ENCODE measurements at regions of chr17 and their contacts with region 1.

Region 1: GRCh38 chr17:69523244-69523861 is 108.9 kb downstream of the MAP2K6 start:
- DNase-seq: peak; percentile 33
- H3K4me3 Mint-ChIP-seq: no peak overlapping the region
- H3K27ac Mint-ChIP-seq: no peak overlapping the region
- H3K4me1 Mint-ChIP-seq: no peaks in the 10 kb centered on the region
- H3K27me3 Mint-ChIP-seq: no peaks in the 10 kb centered on the region

Region 2: GRCh38 chr17:69246726-69247375 is 276.5 kb before region 1 on chr17:
- CTCF ChIA-PET with region 1: no interaction called
- intact Hi-C with region 1: loop called (anchors 2 kb)
- DNase-seq: no peak
- H3K4me3 Mint-ChIP-seq: no peak overlapping the region
- H3K27ac Mint-ChIP-seq: no peak overlapping the region
- H3K4me1 Mint-ChIP-seq: no peaks in the 10 kb centered on the region
- H3K27me3 Mint-ChIP-seq: no peaks in the 10 kb centered on the region

Region 3: GRCh38 chr17:69358688-69359596 is 164.4 kb before region 1 on chr17:
- CTCF ChIA-PET with region 1: interaction called, 4 read pairs
- intact Hi-C with region 1: loop called (anchors 1 kb)
- DNase-seq: peak; percentile 31
- H3K4me3 Mint-ChIP-seq: no peak overlapping the region
- H3K27ac Mint-ChIP-seq: no peak overlapping the region
- H3K4me1 Mint-ChIP-seq: no peaks in the 10 kb centered on the region
- H3K27me3 Mint-ChIP-seq: no peaks in the 10 kb centered on the region

Region 4: GRCh38 chr17:69533481-69534234 is 10.3 kb after region 1 on chr17:
- CTCF ChIA-PET with region 1: interaction called, 10 read pairs
- intact Hi-C with region 1: no loop called
- DNase-seq: no peak
- H3K4me3 Mint-ChIP-seq: no peak overlapping the region
- H3K27ac Mint-ChIP-seq: no peak overlapping the region
- H3K4me1 Mint-ChIP-seq: no peaks in the 10 kb centered on the region
- H3K27me3 Mint-ChIP-seq: no peaks in the 10 kb centered on the region

Region 5: GRCh38 chr17:70137451-70138230 is 614.3 kb after region 1 on chr17:
- CTCF ChIA-PET with region 1: no interaction called
- intact Hi-C with region 1: loop called (anchors 5 kb)
- DNase-seq: peak; percentile 59
- H3K4me3 Mint-ChIP-seq: no peak overlapping the region
- H3K27ac Mint-ChIP-seq: no peak overlapping the region
- H3K4me1 Mint-ChIP-seq: peaks cover 18% of the 10 kb centered on the region
- H3K27me3 Mint-ChIP-seq: no peaks in the 10 kb centered on the region

Region 6: GRCh38 chr17:70622368-70623260 is 1099.3 kb after region 1 on chr17:
- CTCF ChIA-PET with region 1: no interaction called
- intact Hi-C with region 1: loop called (anchors 1 kb)
- DNase-seq: peak; percentile 34
- H3K4me3 Mint-ChIP-seq: no peak overlapping the region
- H3K27ac Mint-ChIP-seq: no peak overlapping the region
- H3K4me1 Mint-ChIP-seq: peaks cover 3% of the 10 kb centered on the region
- H3K27me3 Mint-ChIP-seq: no peaks in the 10 kb centered on the region

Measured in activated naive CD4-positive, alpha-beta T cell treated with anti-CD3 and anti-CD28 coated beads for 36 hours (primary cell).